B cell (primary cell): ENCODE measurements at regions of chr1 and their contacts with region 1.

Region 1: GRCh38 chr1:27556781-27557595 is 47.0 kb downstream of the AHDC1 start:
- DNase-seq: peak; percentile 81
- ATAC-seq: peak; percentile 89
- H3K4me3 ChIP-seq: no peak overlapping the region
- H3K4me3 Mint-ChIP-seq: peak overlapping the region; percentile 39
- H3K27ac ChIP-seq: peak overlapping the region in 1 of 2 donors; percentile 22
- H3K27ac Mint-ChIP-seq: peak overlapping the region; percentile 83
- H3K4me1 ChIP-seq: peaks cover 23 to 33% of the 10 kb centered on the region in 2 donors
- H3K4me1 Mint-ChIP-seq: peaks cover 44% of the 10 kb centered on the region
- H3K27me3 ChIP-seq: no peaks in the 10 kb centered on the region
- H3K27me3 Mint-ChIP-seq: no peaks in the 10 kb centered on the region
- CTCF ChIP-seq: peak; percentile 90

Region 2: DNA sequence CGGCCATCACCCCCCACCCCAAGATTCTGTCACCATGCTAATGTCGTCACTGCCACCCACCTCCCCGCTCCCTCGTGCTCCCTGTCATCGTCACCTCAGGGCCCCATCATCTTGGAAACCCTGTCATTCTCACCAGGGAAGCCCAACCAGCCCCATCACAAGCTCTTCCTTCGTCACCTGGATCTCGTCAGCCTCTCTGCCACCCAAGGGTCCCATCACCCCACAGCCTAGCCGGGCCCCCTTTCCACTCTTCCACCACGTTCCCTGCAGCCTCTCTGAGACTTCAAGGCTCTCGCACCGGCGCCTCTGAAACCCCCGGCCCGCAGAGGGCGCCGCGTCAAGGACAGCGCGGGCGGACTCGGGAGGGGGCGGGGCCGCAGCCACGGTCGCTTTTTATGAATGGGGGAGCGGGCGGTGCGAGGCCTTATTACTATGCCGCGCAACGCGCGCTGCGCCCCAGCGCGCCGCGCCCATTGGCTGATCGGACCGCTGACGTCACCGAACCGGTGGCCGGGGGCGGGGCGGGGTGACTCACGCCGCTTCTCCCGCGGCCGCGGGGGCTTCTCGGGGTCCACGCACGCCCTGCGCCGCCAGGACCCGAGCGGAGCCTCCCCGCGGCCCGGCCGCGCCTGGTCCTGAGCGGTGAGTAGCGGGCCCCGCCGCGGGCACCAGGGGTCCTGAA is 164.8 kb before region 1 on chr1 and contains the start of gene GPR3:
- CTCF ChIA-PET with region 1: interaction called, 10 read pairs
- POLR2A ChIA-PET with region 1: no interaction called
- intact Hi-C with region 1: no loop called
- DNase-seq: peak; percentile 96
- ATAC-seq: peak; percentile 91
- H3K4me3 ChIP-seq: peak within 1 kb of the TSS in 4 of 5 experiments; percentile 34 to 60 (median 56)
- H3K4me3 Mint-ChIP-seq: peak within 1 kb of the TSS; percentile 81
- H3K27ac ChIP-seq: peak within 1 kb of the TSS in 1 of 2 donors; percentile 50
- H3K27ac Mint-ChIP-seq: peak within 1 kb of the TSS; percentile 67
- H3K4me1 ChIP-seq: peaks cover 12 to 24% of the 10 kb centered on the region in 2 donors
- H3K4me1 Mint-ChIP-seq: peaks cover 22% of the 10 kb centered on the region
- H3K27me3 ChIP-seq: no peaks in the 10 kb centered on the region
- H3K27me3 Mint-ChIP-seq: peaks cover 3% of the 10 kb centered on the region
- CTCF ChIP-seq: peak; percentile 65
- total RNA-seq, gene GPR3: not detected in 2 replicates

Region 3: DNA sequence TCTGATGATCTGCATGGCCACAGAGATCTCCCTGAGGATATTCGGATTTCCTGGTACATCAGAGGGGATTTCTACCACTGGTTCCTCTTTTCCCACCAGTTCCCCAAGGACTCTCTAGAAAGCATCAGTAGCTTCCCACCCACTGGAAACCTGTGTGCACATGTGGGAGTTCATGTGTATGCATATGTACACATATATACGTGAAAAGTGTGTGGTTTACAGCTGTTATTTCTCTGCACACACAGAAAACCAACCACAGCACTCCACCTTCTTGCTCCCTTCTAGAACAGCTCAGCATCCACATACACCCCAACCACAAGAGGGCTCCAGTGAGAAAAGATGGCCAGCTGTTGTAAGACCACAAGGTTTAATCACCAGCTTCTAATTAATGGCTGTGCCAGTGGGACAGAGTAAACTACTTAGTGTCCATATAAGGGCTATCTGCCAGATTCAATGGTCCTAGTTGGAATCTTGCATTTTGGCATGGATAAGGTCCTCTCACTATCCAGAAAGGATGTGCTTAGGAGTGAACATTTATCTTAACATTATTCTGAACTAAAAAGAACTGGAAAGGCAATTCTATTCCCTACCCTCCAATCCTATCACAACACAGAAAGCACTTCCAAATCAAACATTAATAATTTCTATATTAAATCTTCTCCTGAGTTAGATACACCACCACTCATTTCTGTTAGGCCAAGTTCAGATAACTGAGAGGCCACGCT is 140.4 kb before region 1 on chr1:
- CTCF ChIA-PET with region 1: interaction called, 26 read pairs
- POLR2A ChIA-PET with region 1: interaction called, 4 read pairs
- intact Hi-C with region 1: no loop called
- DNase-seq: peak; percentile 79
- ATAC-seq: peak; percentile 66
- H3K4me3 ChIP-seq: no peak overlapping the region
- H3K4me3 Mint-ChIP-seq: no peak overlapping the region
- H3K27ac ChIP-seq: peak overlapping the region; percentile 37 to 69
- H3K27ac Mint-ChIP-seq: peak overlapping the region; percentile 69
- H3K4me1 ChIP-seq: peaks cover 38 to 39% of the 10 kb centered on the region in 2 donors
- H3K4me1 Mint-ChIP-seq: peaks cover 41% of the 10 kb centered on the region
- H3K27me3 ChIP-seq: no peaks in the 10 kb centered on the region
- H3K27me3 Mint-ChIP-seq: no peaks in the 10 kb centered on the region
- CTCF ChIP-seq: peak; percentile 78

Region 4: DNA sequence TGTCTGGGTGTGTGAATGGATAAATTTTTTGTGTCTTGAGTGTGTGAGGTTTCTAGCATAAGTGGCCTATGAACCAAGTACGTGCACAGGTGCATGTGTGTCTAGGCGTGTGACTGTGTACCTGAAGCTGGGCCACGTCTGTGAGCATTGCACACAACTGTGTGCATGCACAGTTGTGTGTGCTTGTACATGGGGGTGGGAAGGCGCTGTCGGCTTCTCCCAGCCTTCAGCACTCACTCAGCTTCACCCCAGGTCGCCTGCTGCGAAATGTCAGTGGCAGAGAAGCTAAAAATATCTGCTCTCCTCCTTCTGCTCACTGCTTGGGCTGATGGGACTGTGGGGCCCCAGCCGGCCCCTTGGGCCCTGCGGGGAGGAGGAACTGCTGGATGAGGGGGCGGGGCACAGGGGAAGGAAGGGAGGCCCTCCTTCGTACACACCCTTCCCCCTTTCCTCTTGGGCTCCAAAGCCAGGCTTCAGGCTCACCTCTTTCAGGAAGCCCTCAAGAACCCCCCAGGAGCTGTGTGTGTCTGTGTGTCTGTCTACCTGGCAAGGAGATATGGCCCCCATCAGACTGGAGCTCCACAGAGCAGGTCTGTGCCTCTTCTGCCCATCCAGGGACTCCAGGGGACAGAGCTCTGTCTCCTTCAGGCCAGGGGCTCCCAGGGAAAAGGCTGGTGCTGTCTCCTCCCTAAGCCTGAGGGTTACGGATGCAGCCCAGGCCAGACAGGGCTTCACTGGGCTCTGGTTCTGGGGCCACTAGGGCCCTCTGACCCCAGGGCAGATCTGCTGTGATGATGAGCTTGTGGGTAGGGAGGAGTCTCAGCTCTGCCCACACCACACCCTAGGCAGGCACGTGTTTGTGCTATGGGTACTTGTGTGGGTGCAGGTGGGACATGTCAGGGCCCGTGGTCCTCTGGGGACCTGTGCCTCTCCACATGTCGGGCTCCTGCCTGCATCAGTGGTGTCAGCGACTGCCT is 31.4 kb before region 1 on chr1:
- CTCF ChIA-PET with region 1: interaction called, 6 read pairs
- POLR2A ChIA-PET with region 1: no interaction called
- intact Hi-C with region 1: loop called (anchors 1 kb)
- DNase-seq: peak; percentile 82
- ATAC-seq: peak; percentile 71
- H3K4me3 ChIP-seq: peak overlapping the region in 4 of 5 experiments; percentile 2 to 27 (median 16)
- H3K4me3 Mint-ChIP-seq: peak overlapping the region; percentile 69
- H3K27ac ChIP-seq: peak overlapping the region; percentile 83 to 88
- H3K27ac Mint-ChIP-seq: peak overlapping the region; percentile 87
- H3K4me1 ChIP-seq: peaks cover 67 to 69% of the 10 kb centered on the region in 2 donors
- H3K4me1 Mint-ChIP-seq: peaks cover 75% of the 10 kb centered on the region
- H3K27me3 ChIP-seq: peaks cover 0 to 4% (median 0%) of the 10 kb centered on the region in 4 experiments
- H3K27me3 Mint-ChIP-seq: no peaks in the 10 kb centered on the region
- CTCF ChIP-seq: no peak

Region 5: GRCh38 chr1:27574871-27575831 is 18.2 kb after region 1 on chr1:
- CTCF ChIA-PET with region 1: interaction called, 82 read pairs
- POLR2A ChIA-PET with region 1: interaction called, 3 read pairs
- intact Hi-C with region 1: loop called (anchors 2 kb)
- DNase-seq: peak; percentile 55
- ATAC-seq: peak; percentile 32
- H3K4me3 ChIP-seq: peak overlapping the region in 4 of 5 experiments; percentile 29 to 55 (median 48)
- H3K4me3 Mint-ChIP-seq: peak overlapping the region; percentile 50
- H3K27ac ChIP-seq: no peak overlapping the region
- H3K27ac Mint-ChIP-seq: no peak overlapping the region
- H3K4me1 ChIP-seq: peaks cover 14 to 35% of the 10 kb centered on the region in 2 donors
- H3K4me1 Mint-ChIP-seq: peaks cover 43% of the 10 kb centered on the region
- H3K27me3 ChIP-seq: peaks cover 0 to 4% (median 2%) of the 10 kb centered on the region in 4 experiments
- H3K27me3 Mint-ChIP-seq: no peaks in the 10 kb centered on the region
- CTCF ChIP-seq: peak; percentile 39

Region 6: GRCh38 chr1:27643701-27644625 is 87.0 kb after region 1 on chr1:
- CTCF ChIA-PET with region 1: no interaction called
- POLR2A ChIA-PET with region 1: no interaction called
- intact Hi-C with region 1: no loop called
- DNase-seq: peak; percentile 82
- ATAC-seq: peak; percentile 98
- H3K4me3 ChIP-seq: no peak overlapping the region
- H3K4me3 Mint-ChIP-seq: no peak overlapping the region
- H3K27ac ChIP-seq: no peak overlapping the region
- H3K27ac Mint-ChIP-seq: peak overlapping the region; percentile 74
- H3K4me1 ChIP-seq: peaks cover 10 to 17% of the 10 kb centered on the region in 2 donors
- H3K4me1 Mint-ChIP-seq: peaks cover 16% of the 10 kb centered on the region
- H3K27me3 ChIP-seq: no peaks in the 10 kb centered on the region
- H3K27me3 Mint-ChIP-seq: no peaks in the 10 kb centered on the region
- CTCF ChIP-seq: peak; percentile 85

Region 7: GRCh38 chr1:27671964-27672749 is 115.2 kb after region 1 on chr1 and contains the start of gene IFI6:
- CTCF ChIA-PET with region 1: interaction called, 11 read pairs
- POLR2A ChIA-PET with region 1: no interaction called
- intact Hi-C with region 1: no loop called
- DNase-seq: peak; percentile 83
- ATAC-seq: peak; percentile 90
- H3K4me3 ChIP-seq: peak within 1 kb of the TSS; percentile 59 to 85 (median 75)
- H3K4me3 Mint-ChIP-seq: peak within 1 kb of the TSS; percentile 93
- H3K27ac ChIP-seq: peak within 1 kb of the TSS; percentile 84 to 89
- H3K27ac Mint-ChIP-seq: peak within 1 kb of the TSS; percentile 97
- H3K4me1 ChIP-seq: peaks cover 14 to 24% of the 10 kb centered on the region in 2 donors
- H3K4me1 Mint-ChIP-seq: peaks cover 26% of the 10 kb centered on the region
- H3K27me3 ChIP-seq: no peaks in the 10 kb centered on the region
- H3K27me3 Mint-ChIP-seq: no peaks in the 10 kb centered on the region
- CTCF ChIP-seq: peak; percentile 45
- total RNA-seq, gene IFI6: 12.0 and 12.7 TPM in 2 replicates